PC-9 (cell line): ENCODE measurements at regions of chr10 and their contacts with region 1.

Region 1: GRCh38 chr10:61549861-61550260 is 96.7 kb upstream of the TMEM26 start:
- DNase-seq: no peak
- H3K4me3 ChIP-seq: no peak overlapping the region
- H3K27ac ChIP-seq: no peak overlapping the region
- H3K4me1 ChIP-seq: no peaks in the 10 kb centered on the region
- H3K27me3 ChIP-seq: no peaks in the 10 kb centered on the region
- CTCF ChIP-seq: no peak

Region 2: DNA sequence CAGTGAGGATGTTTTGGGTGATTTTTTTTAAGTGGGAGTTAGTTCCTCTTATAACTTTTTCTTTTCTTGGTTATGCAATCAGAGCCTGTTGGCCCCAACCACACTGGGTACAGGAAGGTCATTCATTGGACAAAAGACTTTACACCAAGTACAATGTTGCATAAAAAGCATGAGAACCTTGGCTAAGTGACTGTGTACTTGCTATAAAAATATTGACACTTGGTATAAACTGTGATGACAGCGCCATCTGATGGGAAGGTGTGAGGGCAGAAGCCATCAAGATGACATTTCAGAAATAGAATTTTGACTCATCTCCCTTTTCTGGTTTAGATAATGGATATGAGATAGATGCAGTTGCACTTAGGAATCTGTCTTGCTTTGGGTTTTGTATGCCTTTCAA is 1517.1 kb before region 1 on chr10:
- CTCF ChIA-PET with region 1: no interaction called
- POLR2A ChIA-PET with region 1: no interaction called
- intact Hi-C with region 1: no loop called
- DNase-seq: peak; percentile 41 to 64
- H3K4me3 ChIP-seq: no peak overlapping the region
- H3K27ac ChIP-seq: no peak overlapping the region
- H3K4me1 ChIP-seq: peaks cover 17% of the 10 kb centered on the region
- H3K27me3 ChIP-seq: no peaks in the 10 kb centered on the region
- CTCF ChIP-seq: peak; percentile 76

Region 3: DNA sequence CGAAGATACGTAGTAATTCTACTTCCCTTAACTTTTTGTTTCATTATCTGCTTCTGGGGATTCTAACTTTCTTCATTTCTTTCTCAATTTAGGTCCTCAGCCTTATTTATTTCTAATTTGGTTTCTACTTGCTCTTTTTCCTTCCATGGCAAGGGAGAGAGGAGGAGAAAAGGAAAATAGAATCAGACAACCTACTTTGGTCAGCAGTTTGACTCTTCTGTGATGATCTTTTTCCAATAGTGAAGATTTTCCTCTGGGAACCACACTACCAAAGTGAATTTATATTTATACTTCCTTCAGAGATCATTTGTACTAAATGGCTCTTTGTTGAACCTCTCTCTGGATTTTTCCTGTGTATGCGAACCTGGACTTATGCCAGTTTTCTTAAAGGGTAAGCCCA is 186.9 kb before region 1 on chr10:
- CTCF ChIA-PET with region 1: no interaction called
- POLR2A ChIA-PET with region 1: no interaction called
- intact Hi-C with region 1: loop called (anchors 2 kb)
- DNase-seq: no peak
- H3K4me3 ChIP-seq: no peak overlapping the region
- H3K27ac ChIP-seq: no peak overlapping the region
- H3K4me1 ChIP-seq: peaks cover 6% of the 10 kb centered on the region; the same call in 1 of the 2 replicates
- H3K27me3 ChIP-seq: no peaks in the 10 kb centered on the region
- CTCF ChIP-seq: no peak